Activated naive CD4-positive, alpha-beta T cell treated with anti-CD3 and anti-CD28 coated beads for 36 hours (primary cell): ENCODE measurements at regions of chr19 and their contacts with region 1.

Region 1: GRCh38 chr19:10269333-10270179 is 1.4 kb upstream of the ICAM1 start:
- DNase-seq: peak; percentile 93
- H3K4me3 Mint-ChIP-seq: peak overlapping the region; percentile 78
- H3K27ac Mint-ChIP-seq: peak overlapping the region; percentile 85
- H3K4me1 Mint-ChIP-seq: peaks cover 31% of the 10 kb centered on the region
- H3K27me3 Mint-ChIP-seq: no peaks in the 10 kb centered on the region

Region 2: DNA sequence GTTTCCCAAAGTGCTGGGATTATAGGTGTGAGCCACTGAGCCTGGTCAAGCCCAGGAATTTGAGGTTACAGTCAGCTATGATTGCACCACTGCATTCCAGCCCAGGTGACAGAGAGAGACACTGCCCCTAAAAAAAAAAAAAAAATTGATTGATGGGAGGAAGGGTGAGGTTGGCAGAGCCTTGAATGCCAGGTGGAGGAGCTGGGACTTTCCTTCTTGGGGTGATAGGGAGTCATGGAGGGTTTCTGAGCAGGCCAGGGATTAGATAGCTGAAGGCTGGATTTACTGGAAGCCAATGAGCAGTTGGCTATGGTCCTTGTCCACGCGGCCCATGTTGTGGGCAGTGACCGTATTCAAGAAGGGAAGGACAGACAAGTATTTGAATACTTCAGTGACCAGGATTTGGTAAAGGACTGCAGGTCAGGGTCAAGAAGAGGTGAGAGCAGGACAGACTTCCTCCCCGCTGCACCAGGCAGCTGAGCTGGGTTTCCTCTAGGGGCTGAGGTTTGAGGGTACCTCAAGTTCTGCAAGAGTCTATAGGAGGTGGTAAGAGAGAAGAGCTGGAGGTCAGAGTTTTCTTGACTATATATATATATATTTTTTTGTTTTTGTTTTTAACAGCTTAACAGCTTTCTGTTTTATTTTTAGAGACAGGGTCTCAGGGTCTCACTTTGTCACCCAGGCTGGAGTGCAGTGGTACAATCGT is 10.3 kb after region 1 on chr19:
- CTCF ChIA-PET with region 1: interaction called, 13 read pairs
- intact Hi-C with region 1: no loop called
- DNase-seq: no peak
- H3K4me3 Mint-ChIP-seq: no peak overlapping the region
- H3K27ac Mint-ChIP-seq: peak overlapping the region; percentile 70
- H3K4me1 Mint-ChIP-seq: peaks cover 15% of the 10 kb centered on the region
- H3K27me3 Mint-ChIP-seq: no peaks in the 10 kb centered on the region

Region 3: GRCh38 chr19:10315335-10316214 is 46.0 kb after region 1 on chr19 and contains the start of gene FDX2:
- CTCF ChIA-PET with region 1: interaction called, 7 read pairs
- intact Hi-C with region 1: loop called (anchors 2 kb)
- DNase-seq: peak; percentile 94
- H3K4me3 Mint-ChIP-seq: peak within 1 kb of the TSS; percentile 89
- H3K27ac Mint-ChIP-seq: peak within 1 kb of the TSS; percentile 83
- H3K4me1 Mint-ChIP-seq: peaks cover 18% of the 10 kb centered on the region
- H3K27me3 Mint-ChIP-seq: no peaks in the 10 kb centered on the region
- total RNA-seq, gene FDX2: 9.5 to 9.7 TPM

Region 4: DNA sequence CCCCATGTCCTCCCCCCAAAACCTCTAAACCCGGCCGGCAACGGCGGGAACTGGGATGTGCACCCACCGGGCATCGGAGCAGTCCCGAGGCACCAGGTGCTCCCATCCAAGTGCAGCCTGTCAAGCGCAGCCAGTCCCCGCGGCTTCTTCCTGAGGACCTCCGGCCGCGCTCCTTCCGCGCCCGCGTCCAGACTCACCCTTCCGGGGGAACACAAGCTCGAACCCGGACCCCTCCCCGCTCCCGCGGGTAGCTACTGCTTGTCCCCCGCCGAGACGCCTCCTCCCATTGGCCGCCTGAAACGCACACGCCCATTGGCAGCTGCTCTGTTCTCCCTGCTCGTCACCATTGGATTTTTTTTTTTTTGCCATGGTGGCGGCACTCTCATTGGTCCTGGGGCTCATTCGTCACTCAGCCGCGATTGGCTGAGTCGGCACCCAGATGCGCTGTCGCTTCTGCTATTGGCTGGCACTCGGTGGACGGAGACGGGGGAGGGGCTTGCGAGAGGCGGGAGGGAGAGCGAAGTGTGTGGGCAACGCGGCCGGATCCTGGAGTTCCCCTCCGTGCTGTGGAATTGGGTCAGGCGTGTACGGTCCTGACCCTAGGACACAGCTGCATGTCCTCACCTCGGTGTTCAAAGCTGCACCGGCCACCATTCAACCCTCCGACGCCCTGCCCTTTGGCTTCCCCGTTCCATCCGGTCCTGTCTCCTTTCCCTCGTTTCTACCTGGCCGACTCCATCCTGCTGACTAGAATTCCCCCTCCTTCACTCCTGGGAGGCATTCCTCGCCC is 111.0 kb after region 1 on chr19 and contains the start of gene TYK2:
- CTCF ChIA-PET with region 1: interaction called, 11 read pairs
- intact Hi-C with region 1: loop called (anchors 2 kb)
- DNase-seq: peak; percentile 97
- H3K4me3 Mint-ChIP-seq: peak within 1 kb of the TSS; percentile 87
- H3K27ac Mint-ChIP-seq: peak within 1 kb of the TSS; percentile 91
- H3K4me1 Mint-ChIP-seq: peaks cover 19% of the 10 kb centered on the region
- H3K27me3 Mint-ChIP-seq: no peaks in the 10 kb centered on the region
- total RNA-seq, gene TYK2: 175 to 190 TPM

Region 5: GRCh38 chr19:10424011-10424637 is 154.6 kb after region 1 on chr19:
- CTCF ChIA-PET with region 1: interaction called, 11 read pairs
- intact Hi-C with region 1: no loop called
- DNase-seq: peak; percentile 81
- H3K4me3 Mint-ChIP-seq: peak overlapping the region; percentile 67
- H3K27ac Mint-ChIP-seq: peak overlapping the region; percentile 91
- H3K4me1 Mint-ChIP-seq: peaks cover 70% of the 10 kb centered on the region
- H3K27me3 Mint-ChIP-seq: peaks cover 63% of the 10 kb centered on the region

Region 6: DNA sequence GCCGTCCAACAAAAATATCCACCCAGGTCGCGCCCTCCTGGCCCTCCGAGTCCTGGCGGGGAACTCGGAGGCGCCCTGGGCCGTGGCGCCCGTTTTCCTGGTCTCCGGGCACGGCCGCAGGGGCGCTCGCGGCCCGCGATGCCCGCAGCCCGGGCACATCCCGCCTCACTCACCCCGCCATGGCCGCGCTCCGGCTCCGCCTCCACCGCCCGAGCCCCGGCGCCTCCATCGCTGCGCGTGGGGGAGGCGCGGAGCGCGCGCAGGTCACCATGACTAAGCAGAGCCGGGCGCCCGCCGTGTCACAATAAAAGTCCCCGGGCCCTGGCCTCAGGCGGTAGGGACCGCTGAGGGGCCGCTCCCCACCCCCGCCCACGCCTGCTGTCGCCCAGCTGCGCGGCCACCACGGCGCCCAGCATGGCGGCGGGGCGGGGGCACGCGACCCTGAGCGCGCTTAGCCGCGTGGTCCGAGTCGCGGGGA is 233.0 kb after region 1 on chr19:
- CTCF ChIA-PET with region 1: no interaction called
- intact Hi-C with region 1: loop called (anchors 2 kb)
- DNase-seq: peak; percentile 93
- H3K4me3 Mint-ChIP-seq: peak overlapping the region; percentile 89
- H3K27ac Mint-ChIP-seq: peak overlapping the region; percentile 88
- H3K4me1 Mint-ChIP-seq: peaks cover 37% of the 10 kb centered on the region
- H3K27me3 Mint-ChIP-seq: no peaks in the 10 kb centered on the region